Caco-2 (cell line): ENCODE measurements at regions of chr11 and their contacts with region 1.

Region 1: DNA sequence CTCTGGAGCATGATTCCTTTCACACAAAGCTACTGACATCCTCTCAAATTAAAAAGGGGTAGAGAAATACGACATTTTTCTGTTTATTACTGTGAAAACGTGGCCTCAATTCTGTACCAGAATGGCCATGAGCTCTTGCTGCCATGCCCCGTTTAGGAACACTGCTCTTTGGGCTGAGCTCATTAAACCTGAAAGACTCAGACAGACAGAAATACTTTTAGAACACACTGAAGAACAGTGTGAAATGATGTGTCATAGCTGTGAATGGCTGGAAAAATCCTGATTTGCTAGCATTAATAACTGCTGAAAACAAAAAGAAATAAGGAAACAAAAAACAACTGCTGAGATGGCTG is 32.2 kb upstream of the TMEM135 start:
- DNase-seq: no peak
- H3K4me3 ChIP-seq: no peak overlapping the region
- H3K4me3 Mint-ChIP-seq: peak overlapping the region; percentile 66
- H3K27ac Mint-ChIP-seq: peak overlapping the region; percentile 93
- H3K4me1 ChIP-seq: peaks cover 42% of the 10 kb centered on the region
- H3K4me1 Mint-ChIP-seq: peaks cover 63% of the 10 kb centered on the region
- H3K27me3 ChIP-seq: no peaks in the 10 kb centered on the region
- H3K27me3 Mint-ChIP-seq: no peaks in the 10 kb centered on the region
- CTCF ChIP-seq: no peak

Region 2: DNA sequence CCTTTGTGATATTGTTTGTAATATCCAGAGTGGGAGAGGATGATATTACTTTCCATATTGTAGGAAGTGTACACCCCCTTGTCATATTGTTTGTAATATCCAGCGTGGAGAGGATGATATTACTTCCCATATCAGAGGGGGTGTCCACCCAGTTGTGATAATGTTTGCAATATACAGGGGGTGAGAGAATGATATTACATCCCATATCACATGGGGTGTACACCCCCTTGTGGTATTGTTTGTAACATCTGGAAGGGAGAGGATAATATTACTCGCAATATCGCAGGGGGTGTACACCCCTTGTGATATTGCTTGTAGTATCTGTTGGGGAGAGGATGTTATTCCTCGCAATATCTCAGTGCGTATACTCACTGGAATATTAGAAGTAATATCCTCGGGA is 143.7 kb before region 1 on chr11:
- CTCF ChIA-PET with region 1: no interaction called
- POLR2A ChIA-PET with region 1: no interaction called
- intact Hi-C with region 1: no loop called
- DNase-seq: no peak
- H3K4me3 ChIP-seq: no peak overlapping the region
- H3K4me3 Mint-ChIP-seq: no peak overlapping the region
- H3K27ac Mint-ChIP-seq: no peak overlapping the region
- H3K4me1 ChIP-seq: no peaks in the 10 kb centered on the region
- H3K4me1 Mint-ChIP-seq: no peaks in the 10 kb centered on the region
- H3K27me3 ChIP-seq: no peaks in the 10 kb centered on the region
- H3K27me3 Mint-ChIP-seq: no peaks in the 10 kb centered on the region
- CTCF ChIP-seq: peak in 1 of 2 experiments; percentile 21

Region 3: DNA sequence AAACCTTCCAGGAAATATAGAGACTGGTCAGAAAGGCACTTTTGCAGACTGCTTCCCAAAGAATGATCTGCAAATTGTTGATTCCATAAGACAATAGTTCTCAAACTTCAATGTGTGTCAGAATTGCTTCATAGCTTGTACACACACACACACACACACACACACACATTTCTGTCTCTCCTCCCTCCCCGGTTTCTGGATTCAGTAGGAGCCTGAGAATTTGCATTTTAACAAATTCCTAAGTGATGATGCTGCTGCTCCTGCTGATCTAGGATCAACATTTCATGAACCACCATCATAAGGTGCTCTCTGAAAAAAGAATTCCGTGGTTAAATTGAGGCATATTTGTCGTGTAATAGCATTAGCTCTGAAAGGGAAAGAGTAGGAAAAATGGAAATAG is 15.0 kb before region 1 on chr11:
- CTCF ChIA-PET with region 1: interaction called, 9 read pairs
- POLR2A ChIA-PET with region 1: interaction called, 3 read pairs
- intact Hi-C with region 1: loop called (anchors 1 kb)
- DNase-seq: peak; percentile 58 to 70
- H3K4me3 ChIP-seq: no peak overlapping the region
- H3K4me3 Mint-ChIP-seq: no peak overlapping the region
- H3K27ac Mint-ChIP-seq: peak overlapping the region; percentile 8
- H3K4me1 ChIP-seq: peaks cover 28% of the 10 kb centered on the region
- H3K4me1 Mint-ChIP-seq: peaks cover 37% of the 10 kb centered on the region
- H3K27me3 ChIP-seq: no peaks in the 10 kb centered on the region
- H3K27me3 Mint-ChIP-seq: no peaks in the 10 kb centered on the region
- CTCF ChIP-seq: no peak

Region 4: GRCh38 chr11:87015645-87016044 is 10.1 kb after region 1 on chr11:
- CTCF ChIA-PET with region 1: no interaction called
- POLR2A ChIA-PET with region 1: interaction called, 4 read pairs
- intact Hi-C with region 1: loop called (anchors 1 kb)
- DNase-seq: no peak
- H3K4me3 ChIP-seq: no peak overlapping the region
- H3K4me3 Mint-ChIP-seq: no peak overlapping the region
- H3K27ac Mint-ChIP-seq: no peak overlapping the region
- H3K4me1 ChIP-seq: peaks cover 15% of the 10 kb centered on the region
- H3K4me1 Mint-ChIP-seq: peaks cover 27% of the 10 kb centered on the region
- H3K27me3 ChIP-seq: no peaks in the 10 kb centered on the region
- H3K27me3 Mint-ChIP-seq: no peaks in the 10 kb centered on the region
- CTCF ChIP-seq: no peak

Region 5: DNA sequence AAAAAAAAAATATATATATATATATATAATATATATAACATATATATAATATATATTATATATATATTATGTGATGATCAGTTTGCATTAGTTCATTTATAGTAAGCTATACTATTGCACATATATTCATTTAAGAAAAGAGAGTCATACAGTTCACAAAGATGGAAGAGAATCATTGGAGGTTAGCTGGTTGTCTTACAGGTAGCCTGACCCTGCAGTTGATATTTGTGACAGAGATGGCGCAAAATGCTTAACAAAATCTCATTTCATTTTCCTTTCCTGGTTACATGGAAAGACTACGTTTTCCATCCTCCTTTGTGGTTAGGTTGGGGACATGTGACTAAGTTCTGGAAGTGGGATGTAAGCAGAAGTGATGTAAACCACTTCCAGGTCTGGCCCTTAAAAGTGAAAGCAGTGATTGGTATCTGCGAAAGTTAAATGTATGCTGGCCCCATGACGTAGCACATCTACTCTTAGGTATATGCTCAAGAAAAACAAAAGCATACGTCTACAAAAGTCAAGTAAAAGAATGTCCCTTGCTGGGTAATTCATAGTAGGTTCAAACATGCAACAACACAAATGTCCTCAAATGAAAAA is 25.0 kb after region 1 on chr11:
- CTCF ChIA-PET with region 1: interaction called, 10 read pairs
- POLR2A ChIA-PET with region 1: interaction called, 4 read pairs
- intact Hi-C with region 1: loop called (anchors 1 kb)
- DNase-seq: peak in 1 of 2 experiments; percentile 47
- H3K4me3 ChIP-seq: no peak overlapping the region
- H3K4me3 Mint-ChIP-seq: no peak overlapping the region
- H3K27ac Mint-ChIP-seq: no peak overlapping the region
- H3K4me1 ChIP-seq: peaks cover 25% of the 10 kb centered on the region
- H3K4me1 Mint-ChIP-seq: peaks cover 34% of the 10 kb centered on the region
- H3K27me3 ChIP-seq: no peaks in the 10 kb centered on the region
- H3K27me3 Mint-ChIP-seq: no peaks in the 10 kb centered on the region
- CTCF ChIP-seq: no peak

Region 6: GRCh38 chr11:87037450-87038234 is 32.1 kb after region 1 on chr11 and contains the start of gene TMEM135:
- CTCF ChIA-PET with region 1: interaction called, 19 read pairs
- POLR2A ChIA-PET with region 1: interaction called, 33 read pairs
- intact Hi-C with region 1: loop called (anchors 2 kb)
- DNase-seq: peak; percentile 99 to 100
- H3K4me3 ChIP-seq: peak within 1 kb of the TSS; percentile 83
- H3K4me3 Mint-ChIP-seq: peak within 1 kb of the TSS; percentile 97
- H3K27ac Mint-ChIP-seq: peak within 1 kb of the TSS; percentile 81
- H3K4me1 ChIP-seq: peaks cover 11% of the 10 kb centered on the region
- H3K4me1 Mint-ChIP-seq: peaks cover 59% of the 10 kb centered on the region
- H3K27me3 ChIP-seq: no peaks in the 10 kb centered on the region
- H3K27me3 Mint-ChIP-seq: no peaks in the 10 kb centered on the region
- CTCF ChIP-seq: peak in 1 of 2 experiments; percentile 62
- total RNA-seq, gene TMEM135: 88.6 and 95.2 TPM in 2 replicates